Activated CD8-positive, alpha-beta T cell treated with anti-CD3 and anti-CD28 coated beads, Interleukin-2, amount 10 ng/mL, durations not matched to agents 7 days and 5 days (primary cell): ENCODE measurements at regions of chr11 and their contacts with region 1.

Region 1: DNA sequence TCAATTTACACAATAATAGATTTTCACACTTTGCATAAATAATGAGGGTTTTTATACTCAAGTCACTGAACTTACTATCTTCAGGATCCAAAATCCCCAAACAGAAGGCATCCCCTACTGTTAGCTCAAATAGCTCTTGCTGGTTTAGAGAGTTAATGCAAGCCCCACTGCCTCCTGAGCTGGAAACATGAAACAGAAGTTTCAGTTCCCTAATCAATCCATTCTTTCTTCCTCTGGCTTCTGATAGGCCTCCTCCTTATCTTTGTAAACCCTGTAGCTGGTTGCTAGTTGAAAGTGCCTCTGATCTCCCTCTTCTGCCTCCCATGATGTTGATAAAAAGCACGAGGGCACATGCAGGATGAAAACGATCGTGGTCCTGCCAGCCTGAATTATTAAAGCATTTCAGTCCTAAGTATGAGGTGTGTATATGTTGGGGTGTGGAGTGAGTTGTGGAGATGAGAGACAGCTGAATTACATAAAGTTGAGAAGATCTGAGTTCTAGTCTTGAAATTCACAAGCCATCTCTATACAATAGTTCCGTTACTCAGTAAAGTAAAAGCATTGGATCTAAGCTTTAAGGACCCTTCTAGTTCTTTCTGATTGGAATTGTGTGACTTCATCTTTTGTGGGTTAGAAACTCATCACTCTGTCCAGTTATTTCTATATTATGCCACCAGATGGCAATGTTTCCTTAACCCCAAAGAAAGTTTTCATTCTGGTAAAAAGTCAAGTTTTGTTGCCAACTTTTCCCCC is 35.0 kb upstream of the EHF start:
- DNase-seq: no peak
- ATAC-seq: no peak
- H3K4me3 Mint-ChIP-seq: no peak overlapping the region
- H3K27ac Mint-ChIP-seq: no peak overlapping the region
- H3K4me1 Mint-ChIP-seq: no peaks in the 10 kb centered on the region
- H3K27me3 Mint-ChIP-seq: peaks cover 40% of the 10 kb centered on the region

Region 2: GRCh38 chr11:34492806-34493414 is 93.0 kb before region 1 on chr11:
- CTCF ChIA-PET with region 1: no interaction called
- POLR2A ChIA-PET with region 1: no interaction called
- DNase-seq: peak; percentile 58
- ATAC-seq: no peak
- H3K4me3 Mint-ChIP-seq: no peak overlapping the region
- H3K27ac Mint-ChIP-seq: no peak overlapping the region
- H3K4me1 Mint-ChIP-seq: no peaks in the 10 kb centered on the region
- H3K27me3 Mint-ChIP-seq: peaks cover 4% of the 10 kb centered on the region

Region 3: GRCh38 chr11:34890812-34891211 is 304.9 kb after region 1 on chr11:
- CTCF ChIA-PET with region 1: interaction called, 30 read pairs
- POLR2A ChIA-PET with region 1: no interaction called
- DNase-seq: no peak
- ATAC-seq: no peak
- H3K4me3 Mint-ChIP-seq: no peak overlapping the region
- H3K27ac Mint-ChIP-seq: no peak overlapping the region
- H3K4me1 Mint-ChIP-seq: no peaks in the 10 kb centered on the region
- H3K27me3 Mint-ChIP-seq: no peaks in the 10 kb centered on the region